Activated T-helper 2 cell treated with anti-CD3 and anti-CD28 coated beads, Interferon-gamma antibody, Interleukin-2, Interleukin-4, amounts not matched to agents 10 μg/mL and 5 μg/mL and 100 μg/mL, durations not matched to agents 14 hours and 24 hours and 36 hours (primary cell): ENCODE measurements at regions of chr2 and their contacts with region 1.

Region 1: GRCh38 chr2:233418761-233419625 is 64.7 kb downstream of the DGKD start:
- DNase-seq: no peak
- H3K4me3 Mint-ChIP-seq: peak overlapping the region; percentile 72
- H3K27ac Mint-ChIP-seq: peak overlapping the region; percentile 71
- H3K4me1 Mint-ChIP-seq: peaks cover 82% of the 10 kb centered on the region
- H3K27me3 Mint-ChIP-seq: no peaks in the 10 kb centered on the region

Region 2: DNA sequence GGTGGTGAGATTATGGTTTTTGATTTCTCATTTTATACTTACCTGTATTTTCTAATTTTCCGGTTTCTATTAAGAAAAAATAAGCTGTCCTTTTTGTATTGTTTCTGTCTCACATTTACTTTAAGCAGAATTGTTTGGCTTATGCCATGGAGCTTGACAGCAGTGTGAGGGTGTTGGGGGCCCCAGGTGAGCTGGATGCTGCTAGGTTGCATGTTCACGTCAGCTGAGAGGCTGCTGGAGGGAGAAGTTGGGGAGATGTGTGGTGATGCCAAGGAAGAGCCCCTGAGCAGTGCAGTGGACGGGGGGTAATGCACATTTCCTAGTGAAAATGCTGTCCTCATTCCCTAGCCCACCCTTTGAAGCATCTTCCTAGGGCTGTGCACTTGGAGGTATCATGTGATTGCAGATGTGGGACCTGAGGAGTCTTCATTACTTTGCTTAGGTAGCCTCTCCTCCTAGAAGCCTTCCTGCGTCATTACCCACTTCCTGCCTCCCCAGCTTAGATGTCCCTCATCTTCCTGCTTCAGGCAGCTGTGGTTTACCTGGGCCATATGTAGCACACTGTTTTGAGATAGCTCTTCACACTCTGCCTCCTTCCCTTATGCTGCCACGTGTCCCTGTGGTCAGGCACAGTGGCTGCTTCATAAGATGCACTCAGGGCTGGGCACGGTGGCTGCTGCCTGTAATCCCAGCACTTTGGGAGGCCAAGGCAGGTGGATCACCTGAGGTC is 151.3 kb before region 1 on chr2:
- intact Hi-C with region 1: loop called (anchors 10 kb)
- DNase-seq: peak; percentile 84
- H3K4me3 Mint-ChIP-seq: peak overlapping the region; percentile 66
- H3K27ac Mint-ChIP-seq: peak overlapping the region; percentile 93
- H3K4me1 Mint-ChIP-seq: peaks cover 61% of the 10 kb centered on the region
- H3K27me3 Mint-ChIP-seq: no peaks in the 10 kb centered on the region

Region 3: DNA sequence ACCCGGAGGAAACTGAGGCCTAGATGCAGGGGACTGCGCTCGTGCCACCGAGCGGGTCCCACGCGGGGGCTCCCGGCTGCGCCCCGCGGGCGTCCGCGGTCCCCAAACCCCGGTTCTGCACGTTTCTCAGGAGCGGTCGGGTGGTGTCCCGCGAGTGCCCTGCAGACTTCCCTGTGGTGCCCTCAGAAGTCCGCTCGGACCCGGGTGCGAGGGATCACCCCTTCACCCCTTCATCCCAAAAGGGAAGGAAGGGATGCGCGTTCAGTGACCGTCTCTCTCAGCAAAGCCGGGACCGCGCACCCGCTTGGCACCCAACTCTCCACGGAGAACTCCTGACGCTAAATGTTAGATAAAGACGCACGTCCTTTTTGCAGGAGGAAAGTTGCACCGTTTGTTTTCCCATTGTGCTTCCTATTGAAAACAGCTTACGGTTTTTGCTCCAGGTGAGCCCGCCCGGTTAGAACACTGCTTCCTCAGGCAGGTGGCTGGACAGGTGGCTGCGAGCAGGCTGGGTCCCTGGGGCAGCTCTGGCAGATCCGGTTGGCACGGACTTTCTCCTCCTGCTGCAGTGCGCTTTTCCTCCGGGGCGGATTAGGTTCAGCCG is 63.9 kb before region 1 on chr2:
- intact Hi-C with region 1: loop called (anchors 5 kb)
- DNase-seq: no peak
- H3K4me3 Mint-ChIP-seq: peak overlapping the region; percentile 83
- H3K27ac Mint-ChIP-seq: peak overlapping the region; percentile 62
- H3K4me1 Mint-ChIP-seq: peaks cover 64% of the 10 kb centered on the region
- H3K27me3 Mint-ChIP-seq: no peaks in the 10 kb centered on the region